Aorta (tissue), 5 donors: ENCODE measurements at regions of chr3 and their contacts with region 1.

Region 1: GRCh38 chr3:134794950-134795745 is at the start of gene EPHB1:
- DNase-seq: peak; percentile 83 to 94
- ATAC-seq: peak; percentile 93
- H3K4me3 ChIP-seq: peak within 1 kb of the TSS; percentile 1 to 41
- H3K27ac ChIP-seq: no peak within 1 kb of the TSS
- H3K4me1 ChIP-seq: no peaks in the 10 kb centered on the region
- H3K27me3 ChIP-seq: no peaks in the 10 kb centered on the region
- total RNA-seq, gene EPHB1: 3.6 to 4.8 TPM

Region 2: GRCh38 chr3:134650431-134651346 is 144.5 kb before region 1 on chr3 and contains the start of gene KY:
- intact Hi-C with region 1: loop called in 1 of 2 experiments (anchors 5 kb)
- DNase-seq: peak; percentile 68 to 88
- ATAC-seq: peak; percentile 84
- H3K4me3 ChIP-seq: peak within 1 kb of the TSS; percentile 8 to 24
- H3K27ac ChIP-seq: peak within 1 kb of the TSS; percentile 45 to 61
- H3K4me1 ChIP-seq: peaks cover 0 to 4% of the 10 kb centered on the region in 2 donors
- H3K27me3 ChIP-seq: no peaks in the 10 kb centered on the region
- total RNA-seq, gene KY: 1.2 to 1.8 TPM

Region 3: GRCh38 chr3:134663721-134664456 is 131.3 kb before region 1 on chr3:
- intact Hi-C with region 1: no loop called
- DNase-seq: peak in 1 of 2 donors; percentile 73
- ATAC-seq: peak; percentile 15
- H3K4me3 ChIP-seq: no peak overlapping the region
- H3K27ac ChIP-seq: peak overlapping the region in 1 of 2 donors; percentile 43
- H3K4me1 ChIP-seq: no peaks in the 10 kb centered on the region
- H3K27me3 ChIP-seq: no peaks in the 10 kb centered on the region

Region 4: GRCh38 chr3:135495891-135496290 is 700.7 kb after region 1 on chr3:
- intact Hi-C with region 1: loop called (anchors 5 to 10 kb)
- DNase-seq: no peak
- ATAC-seq: no peak
- H3K4me3 ChIP-seq: no peak overlapping the region
- H3K27ac ChIP-seq: no peak overlapping the region
- H3K4me1 ChIP-seq: no peaks in the 10 kb centered on the region
- H3K27me3 ChIP-seq: no peaks in the 10 kb centered on the region

Region 5: DNA sequence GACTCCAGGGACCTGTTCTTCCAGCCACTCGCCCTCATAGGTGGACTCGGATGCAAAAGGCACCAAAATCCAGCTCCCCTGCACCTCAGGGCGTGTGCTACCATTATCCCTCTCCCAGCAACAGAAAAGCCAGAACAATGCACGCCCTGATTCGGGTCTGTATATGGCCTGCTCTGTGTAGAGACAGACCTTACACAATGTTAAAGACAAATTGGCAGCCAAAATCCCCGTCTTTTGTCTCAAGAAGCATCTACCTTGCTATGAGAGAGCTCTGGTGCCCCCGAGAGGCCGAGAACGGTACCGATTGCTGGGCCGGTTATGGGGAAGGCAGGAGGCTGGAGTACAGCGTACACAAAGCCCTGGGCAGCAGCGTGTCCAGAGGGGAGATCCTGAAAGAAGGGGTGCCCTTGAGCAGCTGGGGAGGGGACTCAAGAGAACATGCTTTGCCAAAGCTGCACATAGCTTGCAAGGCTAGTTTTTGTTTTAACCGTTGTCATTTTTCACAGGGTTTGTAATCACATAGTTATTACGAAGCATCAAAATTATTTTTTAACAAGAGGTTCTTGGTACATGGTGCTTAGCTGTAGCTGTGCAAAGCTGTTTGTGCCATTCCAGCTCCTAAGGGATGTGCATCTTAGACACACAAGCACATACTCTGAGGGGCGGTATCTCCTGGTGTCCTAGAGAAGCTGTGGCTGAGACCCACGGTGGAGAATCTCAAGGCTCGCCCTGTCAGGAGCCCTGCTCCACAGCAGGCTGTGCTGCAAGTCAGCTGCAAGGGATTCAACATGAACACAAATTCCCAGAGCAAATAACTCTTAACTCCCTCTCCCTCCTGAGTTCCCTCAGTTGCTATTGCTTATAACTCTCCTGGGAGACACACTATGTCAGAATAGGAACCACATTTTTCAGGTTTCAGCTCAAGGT is 708.9 kb after region 1 on chr3:
- intact Hi-C with region 1: loop called (anchors 5 to 10 kb)
- DNase-seq: peak; percentile 49 to 79
- ATAC-seq: peak; percentile 59
- H3K4me3 ChIP-seq: no peak overlapping the region
- H3K27ac ChIP-seq: no peak overlapping the region
- H3K4me1 ChIP-seq: no peaks in the 10 kb centered on the region
- H3K27me3 ChIP-seq: no peaks in the 10 kb centered on the region

Region 6: GRCh38 chr3:135895106-135895733 is 1100.1 kb after region 1 on chr3:
- intact Hi-C with region 1: loop called (anchors 2 to 5 kb)
- DNase-seq: peak; percentile 65 to 85
- ATAC-seq: peak; percentile 64
- H3K4me3 ChIP-seq: no peak overlapping the region
- H3K27ac ChIP-seq: no peak overlapping the region
- H3K4me1 ChIP-seq: no peaks in the 10 kb centered on the region
- H3K27me3 ChIP-seq: no peaks in the 10 kb centered on the region

Region 7: DNA sequence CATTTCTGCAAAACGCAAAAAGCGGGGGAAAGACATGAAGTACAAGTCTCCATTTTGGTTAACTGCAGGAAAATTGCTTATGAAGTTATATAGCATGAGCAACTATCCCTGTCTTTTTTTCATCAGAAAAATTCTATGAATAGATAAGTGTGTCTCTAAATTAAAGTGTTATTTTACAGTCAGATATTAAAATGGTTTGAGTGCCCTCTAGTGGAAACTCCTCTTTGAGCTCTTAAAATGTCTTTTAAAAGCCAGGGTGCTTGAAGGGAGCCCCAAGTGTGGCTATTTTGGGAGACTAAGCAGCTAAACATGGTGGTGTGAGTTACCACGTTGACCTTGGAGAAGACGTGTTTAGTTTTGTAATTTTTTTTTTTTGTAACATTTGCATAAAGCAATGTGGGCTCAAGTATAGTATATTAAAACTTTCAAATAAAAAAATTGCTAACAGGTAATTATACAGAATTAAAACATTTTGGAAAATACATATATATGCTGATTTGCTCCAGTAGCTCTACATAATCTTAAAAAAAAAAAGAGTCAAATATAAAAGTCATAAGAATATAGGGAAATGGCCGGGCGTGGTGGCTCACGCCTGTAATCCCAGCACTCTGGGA is 1247.6 kb after region 1 on chr3:
- intact Hi-C with region 1: loop called in 1 of 2 experiments (anchors 10 kb)
- DNase-seq: no peak
- ATAC-seq: no peak
- H3K4me3 ChIP-seq: no peak overlapping the region
- H3K27ac ChIP-seq: no peak overlapping the region
- H3K4me1 ChIP-seq: no peaks in the 10 kb centered on the region
- H3K27me3 ChIP-seq: no peaks in the 10 kb centered on the region